Activated CD4-positive, alpha-beta T cell treated with anti-CD3 and anti-CD28 coated beads, Interleukin-2, amount 10 ng/mL, durations not matched to agents 24 days and 14 days (primary cell): ENCODE measurements at regions of chr6 and their contacts with region 1.

Region 1: GRCh38 chr6:136783495-136784270 is 8.6 kb downstream of the MAP3K5 start:
- DNase-seq: peak; percentile 62
- H3K4me3 Mint-ChIP-seq: peak overlapping the region; percentile 23
- H3K27ac Mint-ChIP-seq: peak overlapping the region; percentile 66
- H3K4me1 Mint-ChIP-seq: peaks cover 60% of the 10 kb centered on the region
- H3K27me3 Mint-ChIP-seq: no peaks in the 10 kb centered on the region

Region 2: GRCh38 chr6:136764517-136764993 is 19.1 kb before region 1 on chr6:
- intact Hi-C with region 1: loop called (anchors 2 kb)
- DNase-seq: peak; percentile 71
- H3K4me3 Mint-ChIP-seq: peak overlapping the region; percentile 48
- H3K27ac Mint-ChIP-seq: peak overlapping the region; percentile 59
- H3K4me1 Mint-ChIP-seq: peaks cover 70% of the 10 kb centered on the region
- H3K27me3 Mint-ChIP-seq: no peaks in the 10 kb centered on the region

Region 3: DNA sequence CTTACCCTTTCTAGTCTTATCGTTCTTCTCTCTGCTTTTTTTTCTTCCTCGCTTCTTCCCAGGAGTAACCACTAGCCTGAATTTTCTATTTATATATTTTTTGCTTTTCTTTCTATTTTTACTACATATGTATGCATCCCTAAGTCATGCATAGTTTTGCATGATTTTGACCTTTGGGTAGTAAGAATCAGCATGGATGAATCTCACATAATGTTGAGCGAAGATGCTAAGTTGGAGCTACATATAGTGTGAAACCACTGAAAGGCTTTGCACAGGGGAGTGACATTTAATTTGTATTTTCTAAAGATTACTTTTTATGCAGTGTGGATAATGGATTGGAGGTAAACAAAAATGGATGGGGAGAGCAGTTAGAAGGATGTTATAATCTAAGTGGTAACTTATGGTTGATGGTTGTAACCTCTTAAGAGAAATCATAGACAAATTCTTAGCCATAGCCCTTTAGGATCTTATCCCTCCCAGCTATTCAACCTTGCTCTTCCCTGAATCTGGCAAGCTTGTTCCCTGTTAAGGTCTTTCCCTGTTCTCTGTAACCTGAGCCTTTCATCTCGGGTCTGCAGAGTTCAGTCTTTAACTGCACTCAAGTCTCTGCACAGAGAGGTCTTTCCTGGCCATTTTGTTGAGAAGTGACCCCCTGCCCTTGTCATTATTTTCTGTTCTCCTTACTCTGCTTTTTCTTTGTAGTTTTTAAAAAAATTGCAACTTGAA is 56.8 kb after region 1 on chr6:
- intact Hi-C with region 1: no loop called
- DNase-seq: no peak
- H3K4me3 Mint-ChIP-seq: no peak overlapping the region
- H3K27ac Mint-ChIP-seq: no peak overlapping the region
- H3K4me1 Mint-ChIP-seq: no peaks in the 10 kb centered on the region
- H3K27me3 Mint-ChIP-seq: no peaks in the 10 kb centered on the region